ENCODE measurements at regions of chr20 and their contacts with region 1.

Region 1: GRCh38 chr20:40390654-40391053 is 298.4 kb downstream of the MAFB start:
- DNase-seq: no peak
- H3K4me3 ChIP-seq: no peak overlapping the region
- H3K27ac ChIP-seq: no peak overlapping the region
- H3K4me1 ChIP-seq: no peaks in the 10 kb centered on the region
- H3K27me3 ChIP-seq: no peaks in the 10 kb centered on the region
- CTCF ChIP-seq: no peak

Region 2: GRCh38 chr20:40442181-40442963 is 51.7 kb after region 1 on chr20:
- CTCF ChIA-PET with region 1: no interaction called
- dilution Hi-C with region 1: loop called (anchors 5 kb)
- in situ Hi-C with region 1: no loop called
- intact Hi-C with region 1: no loop called
- DNase-seq: no peak
- H3K4me3 ChIP-seq: no peak overlapping the region
- H3K27ac ChIP-seq: no peak overlapping the region
- H3K4me1 ChIP-seq: no peaks in the 10 kb centered on the region
- H3K27me3 ChIP-seq: no peaks in the 10 kb centered on the region
- CTCF ChIP-seq: peak; percentile 19 to 20

Region 3: DNA sequence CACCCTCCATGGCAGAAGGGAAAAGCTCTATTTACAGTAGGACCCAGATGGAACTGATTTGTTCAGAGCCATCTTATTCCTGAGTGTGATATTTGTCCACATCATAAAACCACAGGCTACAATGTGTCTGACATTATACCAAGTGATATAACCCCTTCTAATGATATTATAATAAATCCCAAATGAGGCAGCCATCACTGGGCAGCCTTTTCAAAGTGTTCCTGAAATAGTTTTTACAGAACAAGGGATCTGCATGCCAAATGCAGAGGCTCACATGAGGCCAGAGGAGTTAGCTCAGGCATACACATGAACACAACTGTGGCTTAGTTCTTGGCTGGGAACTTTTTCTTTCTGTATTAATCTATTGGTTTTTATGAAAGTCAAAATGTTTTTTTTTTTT is 90.7 kb after region 1 on chr20:
- CTCF ChIA-PET with region 1: no interaction called
- dilution Hi-C with region 1: loop called (anchors 5 kb)
- in situ Hi-C with region 1: no loop called
- intact Hi-C with region 1: no loop called
- DNase-seq: no peak
- H3K4me3 ChIP-seq: no peak overlapping the region
- H3K27ac ChIP-seq: no peak overlapping the region
- H3K4me1 ChIP-seq: no peaks in the 10 kb centered on the region
- H3K27me3 ChIP-seq: no peaks in the 10 kb centered on the region
- CTCF ChIP-seq: no peak